ENCODE measurements at regions of chr6 and their contacts with region 1.

Region 1: DNA sequence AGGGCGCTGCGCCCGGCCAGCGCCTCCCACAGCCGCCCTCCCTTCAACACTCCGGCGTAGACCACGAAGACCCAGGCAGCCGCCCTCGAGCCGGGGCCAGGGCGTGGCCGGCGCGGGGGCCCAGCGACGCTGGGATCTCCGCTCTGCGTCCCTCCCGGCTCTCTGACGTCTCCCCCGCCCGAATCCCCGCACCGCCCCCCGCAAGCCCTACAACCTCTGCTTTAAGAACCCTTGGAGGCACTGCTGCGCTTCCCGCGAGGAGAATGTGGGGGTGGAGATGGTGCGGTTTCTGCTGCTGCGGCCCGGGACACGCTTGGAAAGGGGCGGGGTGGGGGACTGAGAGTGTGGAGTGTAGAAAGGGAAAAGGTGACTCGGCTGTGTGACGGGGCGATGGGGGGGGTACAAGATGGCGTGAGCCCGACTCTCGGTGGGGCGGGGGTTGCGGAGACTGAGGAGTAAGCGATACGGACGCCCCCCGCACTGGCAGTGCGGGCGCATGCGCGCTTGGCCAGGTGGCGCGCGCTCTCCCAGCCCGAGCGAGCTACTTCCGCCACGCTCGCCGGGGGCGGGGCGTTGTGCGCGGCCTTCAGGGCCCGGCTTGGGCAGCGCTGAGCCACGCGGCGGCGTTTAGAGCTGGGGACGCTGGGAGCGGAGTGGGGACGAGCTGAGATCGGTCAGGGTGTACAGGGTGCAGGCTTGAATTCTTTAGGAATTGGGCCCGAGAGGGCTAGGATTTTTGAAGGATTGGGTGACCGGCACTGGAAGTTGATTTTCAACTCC is at the start of gene SUPT3H:
- DNase-seq: peak; percentile 89
- H3K4me3 Mint-ChIP-seq: peak within 1 kb of the TSS; percentile 99
- H3K27ac Mint-ChIP-seq: peak within 1 kb of the TSS; percentile 100
- H3K4me1 Mint-ChIP-seq: peaks cover 23% of the 10 kb centered on the region
- H3K27me3 Mint-ChIP-seq: no peaks in the 10 kb centered on the region
- total RNA-seq, gene SUPT3H: 14.8 and 19.4 TPM in 2 replicates

Region 2: DNA sequence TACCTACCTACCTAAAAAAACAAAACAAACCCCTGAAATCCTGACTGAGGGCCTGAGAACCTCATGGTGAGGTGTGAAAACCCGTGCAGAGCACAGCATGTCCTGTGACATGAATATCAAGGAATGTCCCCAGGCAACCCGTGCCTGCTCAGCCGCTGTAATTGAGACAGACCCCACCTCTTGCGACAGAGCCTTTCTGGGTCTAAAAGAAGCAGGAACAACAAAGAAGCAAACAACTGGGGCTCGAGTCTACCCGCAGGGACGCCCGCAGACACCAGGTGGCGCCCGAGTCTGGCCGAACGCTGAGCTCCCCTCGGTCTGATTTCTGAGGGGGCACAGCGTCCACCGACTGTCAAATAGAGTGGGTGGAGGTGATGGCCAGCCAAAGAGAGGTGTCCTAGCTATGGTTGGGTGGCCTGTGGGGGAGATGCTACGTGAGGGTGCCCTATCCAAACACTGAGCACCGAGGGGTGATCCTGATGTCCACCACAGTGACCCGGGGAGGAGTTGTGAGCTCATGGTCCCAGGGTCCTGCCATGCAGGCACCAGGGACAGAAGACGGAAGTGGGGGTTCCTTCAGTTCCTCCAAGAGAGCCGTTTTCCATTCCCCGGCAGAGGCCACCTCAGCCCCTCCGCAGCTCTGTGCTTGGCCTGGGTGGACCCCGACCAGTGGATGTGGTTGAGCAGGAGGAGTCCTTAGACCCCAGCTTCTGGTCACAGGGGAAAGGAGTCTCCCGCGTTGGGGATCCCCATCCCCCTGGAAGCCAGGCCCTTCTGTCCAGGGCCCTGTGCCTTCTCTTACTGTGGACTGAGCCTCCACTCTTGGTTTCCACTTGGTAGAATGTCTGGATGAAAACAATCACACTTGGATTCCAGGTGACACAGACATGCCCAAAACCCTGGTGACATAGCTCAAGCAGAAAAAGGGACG is 722.1 kb before region 1 on chr6:
- intact Hi-C with region 1: loop called (anchors 1 kb)
- DNase-seq: peak; percentile 55
- H3K4me3 Mint-ChIP-seq: peak overlapping the region; percentile 53
- H3K27ac Mint-ChIP-seq: peak overlapping the region; percentile 89
- H3K4me1 Mint-ChIP-seq: peaks cover 12% of the 10 kb centered on the region
- H3K27me3 Mint-ChIP-seq: no peaks in the 10 kb centered on the region

Region 3: DNA sequence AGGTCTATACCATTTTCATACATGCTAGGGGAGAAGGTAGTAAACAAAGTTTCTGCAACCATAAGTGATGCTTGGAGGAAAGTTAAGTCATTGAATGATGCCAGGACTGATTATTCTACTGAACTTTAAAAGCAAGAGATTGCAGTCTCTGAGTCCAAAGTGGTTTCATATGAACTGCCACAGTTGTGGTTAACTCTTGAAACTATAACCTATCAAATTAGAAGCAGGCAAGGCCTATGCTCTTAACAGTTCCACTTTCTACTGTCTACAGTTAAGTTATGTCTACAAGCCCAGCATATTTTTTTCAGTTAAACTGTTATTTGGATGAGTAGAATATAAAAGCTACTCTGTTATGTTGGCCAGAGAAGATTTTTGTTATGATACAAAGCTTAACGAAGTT is 376.1 kb before region 1 on chr6:
- intact Hi-C with region 1: loop called (anchors 2 kb)
- DNase-seq: peak; percentile 24
- H3K4me3 Mint-ChIP-seq: peak overlapping the region; percentile 5
- H3K27ac Mint-ChIP-seq: peak overlapping the region; percentile 93
- H3K4me1 Mint-ChIP-seq: peaks cover 39% of the 10 kb centered on the region
- H3K27me3 Mint-ChIP-seq: no peaks in the 10 kb centered on the region

Region 4: DNA sequence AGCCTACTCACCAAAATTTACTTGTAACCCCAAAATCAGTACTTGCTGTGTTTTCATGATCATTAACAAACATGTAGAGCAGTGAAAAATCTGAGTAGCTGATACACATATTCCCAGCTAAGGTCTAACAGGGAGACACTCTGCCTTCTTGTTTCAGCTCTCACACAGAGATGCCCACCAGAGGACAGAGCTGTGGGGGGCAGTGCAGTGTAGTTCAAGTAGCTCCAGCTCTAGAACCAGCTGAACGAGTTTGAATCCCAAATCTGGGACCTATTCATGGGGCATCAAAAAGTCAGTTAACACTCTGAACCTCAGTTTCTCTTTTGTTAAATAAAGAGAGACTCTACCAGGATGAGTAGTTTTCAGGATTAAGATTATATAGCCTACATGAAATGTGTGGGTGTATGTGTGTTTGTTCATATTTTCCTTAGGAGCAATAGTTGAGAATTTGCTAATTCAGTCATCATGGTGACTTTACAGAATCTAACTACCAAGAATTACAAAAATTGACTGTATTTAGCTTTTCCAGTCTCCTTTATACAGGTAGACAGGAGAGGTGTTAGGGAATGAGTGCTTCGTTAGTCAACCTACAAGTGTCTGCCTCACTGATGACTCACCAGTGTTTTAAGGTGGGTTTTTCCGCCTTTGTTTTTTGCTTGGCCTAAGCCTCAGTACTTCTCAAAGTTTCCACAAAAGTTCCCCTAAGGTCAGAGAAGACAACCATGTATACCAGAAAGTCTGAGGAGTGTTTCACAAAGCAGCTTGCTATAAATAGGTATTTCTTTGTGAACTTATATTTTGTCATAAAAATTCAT is 213.6 kb before region 1 on chr6:
- intact Hi-C with region 1: loop called (anchors 1 kb)
- DNase-seq: no peak
- H3K4me3 Mint-ChIP-seq: no peak overlapping the region
- H3K27ac Mint-ChIP-seq: peak overlapping the region; percentile 81
- H3K4me1 Mint-ChIP-seq: peaks cover 46% of the 10 kb centered on the region
- H3K27me3 Mint-ChIP-seq: no peaks in the 10 kb centered on the region

Measured in activated T-helper 2 cell treated with anti-CD3 and anti-CD28 coated beads, Interferon-gamma antibody, Interleukin-2, Interleukin-4, amounts not matched to agents 10 μg/mL and 5 μg/mL and 100 μg/mL, durations not matched to agents 14 hours and 24 hours and 36 hours (primary cell).